ENCODE measurements at regions of chr11 and their contacts with region 1.

Region 1: DNA sequence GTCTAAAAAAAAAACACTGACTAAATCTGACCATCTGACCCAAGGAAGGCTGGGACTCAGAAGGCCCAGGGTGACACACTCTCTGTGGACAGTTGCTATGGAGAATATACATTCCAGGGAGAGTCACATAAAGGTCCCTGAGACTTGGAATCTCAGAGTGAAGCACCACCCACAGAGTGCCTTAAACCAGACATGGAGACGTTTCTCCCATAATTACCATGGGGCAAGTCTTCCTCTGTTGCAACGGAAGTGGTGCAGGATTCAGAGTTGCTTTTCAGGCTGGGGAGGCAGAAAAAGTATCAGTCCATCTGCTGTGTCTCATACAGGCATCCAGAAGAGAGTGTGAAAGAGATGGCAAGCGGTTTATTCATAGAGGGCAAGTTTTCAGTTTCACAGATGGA is 58.7 kb upstream of the SLN start:
- DNase-seq: no peak
- H3K4me3 Mint-ChIP-seq: no peak overlapping the region
- H3K27ac Mint-ChIP-seq: no peak overlapping the region
- H3K4me1 Mint-ChIP-seq: no peaks in the 10 kb centered on the region
- H3K27me3 Mint-ChIP-seq: peaks cover 33% of the 10 kb centered on the region
- CTCF ChIP-seq: no peak

Region 2: DNA sequence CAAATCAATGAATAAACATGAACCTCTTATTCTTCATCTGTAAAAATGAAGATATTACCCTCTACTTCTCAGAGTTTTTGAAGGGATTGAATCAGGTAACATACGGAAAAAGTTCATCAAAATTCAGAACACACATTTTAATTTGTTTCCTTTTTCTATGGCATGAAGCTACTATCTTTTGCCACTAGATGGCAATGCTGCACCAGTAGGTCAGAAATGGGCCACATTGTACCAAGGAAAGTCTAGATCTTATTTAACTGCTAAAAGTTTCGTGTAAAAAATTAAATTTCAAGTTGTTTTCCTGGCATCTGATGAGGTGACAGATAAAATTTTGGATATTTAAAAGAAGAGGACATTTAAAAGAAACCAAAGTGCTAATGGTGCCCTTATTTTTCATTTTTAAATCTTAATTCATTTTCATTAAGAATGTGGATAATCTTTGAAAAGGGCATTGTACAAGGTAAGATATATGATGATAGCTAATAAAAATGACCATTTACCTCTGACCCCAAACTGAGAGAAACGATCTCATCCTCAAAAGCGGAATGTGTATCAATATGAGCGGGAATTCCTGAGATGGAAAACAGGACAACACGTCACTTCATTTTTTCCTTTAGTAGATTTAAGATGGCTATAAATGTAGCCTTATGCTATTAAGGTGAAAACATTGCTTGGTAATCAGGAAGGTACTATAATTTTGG is 221.1 kb before region 1 on chr11:
- CTCF ChIA-PET with region 1: interaction called, 8 read pairs
- POLR2A ChIA-PET with region 1: interaction called, 3 read pairs
- intact Hi-C with region 1: loop called (anchors 1 kb)
- DNase-seq: peak; percentile 63
- H3K4me3 Mint-ChIP-seq: no peak overlapping the region
- H3K27ac Mint-ChIP-seq: no peak overlapping the region
- H3K4me1 Mint-ChIP-seq: peaks cover 13% of the 10 kb centered on the region
- H3K27me3 Mint-ChIP-seq: no peaks in the 10 kb centered on the region
- CTCF ChIP-seq: peak; percentile 67

Region 3: GRCh38 chr11:107565219-107565937 is 205.2 kb before region 1 on chr11 and contains the start of gene ALKBH8:
- CTCF ChIA-PET with region 1: interaction called, 34 read pairs
- POLR2A ChIA-PET with region 1: interaction called, 17 read pairs
- intact Hi-C with region 1: loop called (anchors 1 kb)
- DNase-seq: peak; percentile 72
- H3K4me3 Mint-ChIP-seq: peak within 1 kb of the TSS; percentile 83
- H3K27ac Mint-ChIP-seq: peak within 1 kb of the TSS; percentile 82
- H3K4me1 Mint-ChIP-seq: peaks cover 23% of the 10 kb centered on the region
- H3K27me3 Mint-ChIP-seq: no peaks in the 10 kb centered on the region
- CTCF ChIP-seq: no peak
- total RNA-seq, gene ALKBH8: 5.1 and 7.3 TPM in 2 replicates

Region 4: GRCh38 chr11:107573438-107573837 is 197.1 kb before region 1 on chr11:
- CTCF ChIA-PET with region 1: interaction called, 40 read pairs
- POLR2A ChIA-PET with region 1: interaction called, 3 read pairs
- intact Hi-C with region 1: loop called (anchors 1 kb)
- DNase-seq: no peak
- H3K4me3 Mint-ChIP-seq: no peak overlapping the region
- H3K27ac Mint-ChIP-seq: no peak overlapping the region
- H3K4me1 Mint-ChIP-seq: no peaks in the 10 kb centered on the region
- H3K27me3 Mint-ChIP-seq: peaks cover 15% of the 10 kb centered on the region
- CTCF ChIP-seq: no peak

Region 5: GRCh38 chr11:107741044-107741823 is 29.3 kb before region 1 on chr11:
- CTCF ChIA-PET with region 1: interaction called, 17 read pairs
- POLR2A ChIA-PET with region 1: no interaction called
- intact Hi-C with region 1: no loop called
- DNase-seq: peak; percentile 63
- H3K4me3 Mint-ChIP-seq: no peak overlapping the region
- H3K27ac Mint-ChIP-seq: no peak overlapping the region
- H3K4me1 Mint-ChIP-seq: no peaks in the 10 kb centered on the region
- H3K27me3 Mint-ChIP-seq: peaks cover 78% of the 10 kb centered on the region
- CTCF ChIP-seq: peak; percentile 61

Region 6: DNA sequence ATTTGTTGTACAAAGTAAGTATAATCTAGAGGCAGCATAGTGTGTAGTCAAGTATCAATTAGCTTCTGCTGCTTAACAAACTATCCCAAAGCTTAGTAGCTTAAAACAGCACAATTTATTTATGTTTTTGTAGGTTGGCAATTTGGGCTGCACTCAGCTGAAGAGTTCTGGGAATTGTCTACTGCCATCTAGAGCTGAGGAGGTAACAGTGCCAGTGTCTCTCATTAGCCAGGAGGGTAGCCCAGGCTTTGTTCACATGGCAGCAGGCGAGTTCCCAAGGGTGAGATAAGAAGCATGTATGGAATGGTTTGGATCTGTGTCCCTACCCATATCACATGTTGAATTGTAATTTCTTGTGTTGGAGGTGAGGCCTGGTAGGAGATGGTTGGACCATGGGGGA is 12.9 kb before region 1 on chr11:
- CTCF ChIA-PET with region 1: interaction called, 48 read pairs
- POLR2A ChIA-PET with region 1: no interaction called
- intact Hi-C with region 1: no loop called
- DNase-seq: no peak
- H3K4me3 Mint-ChIP-seq: no peak overlapping the region
- H3K27ac Mint-ChIP-seq: no peak overlapping the region
- H3K4me1 Mint-ChIP-seq: no peaks in the 10 kb centered on the region
- H3K27me3 Mint-ChIP-seq: peaks cover 56% of the 10 kb centered on the region
- CTCF ChIP-seq: no peak

Region 7: GRCh38 chr11:107969219-107969618 is 198.7 kb after region 1 on chr11:
- CTCF ChIA-PET with region 1: no interaction called
- POLR2A ChIA-PET with region 1: no interaction called
- intact Hi-C with region 1: no loop called
- DNase-seq: no peak
- H3K4me3 Mint-ChIP-seq: no peak overlapping the region
- H3K27ac Mint-ChIP-seq: no peak overlapping the region
- H3K4me1 Mint-ChIP-seq: no peaks in the 10 kb centered on the region
- H3K27me3 Mint-ChIP-seq: peaks cover 11% of the 10 kb centered on the region
- CTCF ChIP-seq: no peak

Measured in MCF 10A (cell line).